ENCODE measurements at regions of chr11 and their contacts with region 1.

Region 1: GRCh38 chr11:63838678-63839507 is at the start of gene MARK2:
- DNase-seq: peak; percentile 99
- H3K4me3 ChIP-seq: peak within 1 kb of the TSS; percentile 76 to 87
- H3K27ac ChIP-seq: peak within 1 kb of the TSS; percentile 85 to 93
- H3K4me1 ChIP-seq: peaks cover 14% of the 10 kb centered on the region
- H3K27me3 ChIP-seq: no peaks in the 10 kb centered on the region
- CTCF ChIP-seq: no peak
- POLR2A ChIP-seq: peak; percentile 81
- total RNA-seq, gene MARK2: 65.4 to 67.2 TPM

Region 2: DNA sequence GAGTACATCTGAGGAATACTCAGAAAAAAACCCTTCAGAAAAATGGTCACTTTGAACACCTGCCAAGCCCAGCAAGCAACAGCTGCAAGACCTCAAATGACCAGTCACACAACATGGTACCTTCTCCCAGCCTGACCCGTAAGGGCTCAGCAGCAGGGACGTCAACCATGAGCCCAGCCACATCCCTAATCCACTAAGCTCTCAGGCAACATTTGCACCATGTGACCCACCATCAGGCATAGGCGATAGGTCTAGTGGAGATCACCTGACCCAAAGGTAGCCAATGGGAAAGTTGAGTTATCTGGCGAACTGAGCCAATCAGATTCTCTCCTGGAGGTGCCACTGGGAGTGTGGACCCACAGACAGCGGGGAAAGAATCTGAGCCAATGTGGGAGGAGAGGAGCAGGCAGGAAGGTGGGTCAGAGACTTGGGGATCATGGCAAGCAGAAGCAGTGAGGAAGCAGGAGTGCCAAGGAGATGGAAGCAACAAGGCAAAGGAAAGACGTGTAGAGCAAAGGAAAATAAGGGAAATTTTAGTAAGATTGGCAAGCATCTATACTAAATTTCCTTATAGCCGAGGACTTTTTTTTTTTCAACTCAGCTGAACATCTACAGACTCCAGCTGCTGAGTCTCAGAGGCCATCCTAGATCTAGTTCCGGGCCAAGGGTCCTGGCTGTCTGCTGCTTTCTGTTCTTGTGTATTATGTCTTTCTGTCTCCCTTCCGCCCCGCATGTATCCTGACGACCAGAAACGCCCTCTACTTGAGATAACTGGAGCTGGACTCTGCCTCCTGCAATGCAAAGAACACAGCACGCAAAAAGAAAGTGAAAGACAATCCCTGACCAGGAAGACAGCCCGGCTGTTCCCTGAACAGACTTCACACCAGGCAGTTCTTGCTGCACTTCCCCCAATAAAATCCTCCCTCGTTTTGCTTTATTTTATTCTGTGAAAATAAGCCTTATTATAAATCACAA is 264.7 kb before region 1 on chr11:
- intact Hi-C with region 1: no loop called
- DNase-seq: peak; percentile 67
- H3K4me3 ChIP-seq: peak overlapping the region; percentile 13 to 23
- H3K27ac ChIP-seq: peak overlapping the region; percentile 62 to 71
- H3K4me1 ChIP-seq: peaks cover 2% of the 10 kb centered on the region
- H3K27me3 ChIP-seq: no peaks in the 10 kb centered on the region
- CTCF ChIP-seq: peak in 1 of 4 experiments; percentile 8
- POLR2A ChIP-seq: no peak

Region 3: GRCh38 chr11:63745304-63746170 is 93.4 kb before region 1 on chr11:
- intact Hi-C with region 1: no loop called
- DNase-seq: no peak
- H3K4me3 ChIP-seq: no peak overlapping the region
- H3K27ac ChIP-seq: no peak overlapping the region
- H3K4me1 ChIP-seq: no peaks in the 10 kb centered on the region
- H3K27me3 ChIP-seq: no peaks in the 10 kb centered on the region
- CTCF ChIP-seq: peak in 1 of 4 experiments; percentile 2
- POLR2A ChIP-seq: no peak

Region 4: DNA sequence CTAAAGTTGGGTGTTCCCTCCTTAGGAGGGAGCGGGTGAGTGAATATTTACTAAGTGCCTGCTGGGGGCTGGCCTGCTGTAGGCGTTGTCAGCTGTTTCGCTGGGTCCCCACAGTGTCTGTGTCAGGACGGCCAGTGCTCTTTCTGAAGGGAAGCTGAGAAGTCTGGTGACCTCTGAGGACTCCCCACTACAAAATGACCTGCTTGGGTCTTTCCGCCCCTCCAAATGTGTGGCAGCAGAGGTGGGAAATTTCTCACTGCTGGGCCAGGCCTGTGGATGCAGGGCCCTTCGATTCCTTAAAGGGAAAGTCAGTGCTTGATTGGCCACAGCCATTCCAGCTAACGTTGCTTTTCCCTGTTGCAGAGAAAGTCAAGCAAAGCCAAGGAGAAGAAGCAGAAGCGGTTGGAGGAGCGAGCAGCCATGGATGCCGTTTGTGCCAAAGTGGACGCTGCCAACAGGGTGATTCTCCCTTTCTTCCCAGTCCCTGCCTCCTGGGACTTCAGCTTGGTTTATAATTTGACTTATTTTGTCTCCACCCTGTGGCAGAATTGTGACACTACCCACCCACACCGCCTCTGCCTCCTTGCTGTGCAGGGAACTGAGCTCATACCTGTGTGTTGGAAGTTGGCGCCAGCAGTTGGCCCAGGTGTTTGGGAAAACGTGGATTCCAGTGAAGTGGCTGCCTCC is 106.7 kb after region 1 on chr11:
- intact Hi-C with region 1: loop called (anchors 1 kb)
- DNase-seq: peak; percentile 85
- H3K4me3 ChIP-seq: no peak overlapping the region
- H3K27ac ChIP-seq: peak overlapping the region; percentile 14 to 19
- H3K4me1 ChIP-seq: no peaks in the 10 kb centered on the region
- H3K27me3 ChIP-seq: no peaks in the 10 kb centered on the region
- CTCF ChIP-seq: peak; percentile 50 to 96 (median 85)
- POLR2A ChIP-seq: no peak

Region 5: GRCh38 chr11:64000026-64000739 is 161.3 kb after region 1 on chr11:
- intact Hi-C with region 1: no loop called
- DNase-seq: peak; percentile 55
- H3K4me3 ChIP-seq: peak overlapping the region; percentile 20 to 24
- H3K27ac ChIP-seq: peak overlapping the region in 1 of 2 donors; percentile 31
- H3K4me1 ChIP-seq: peaks cover 22% of the 10 kb centered on the region
- H3K27me3 ChIP-seq: no peaks in the 10 kb centered on the region
- CTCF ChIP-seq: peak; percentile 79 to 98 (median 90)
- POLR2A ChIP-seq: no peak

Region 6: DNA sequence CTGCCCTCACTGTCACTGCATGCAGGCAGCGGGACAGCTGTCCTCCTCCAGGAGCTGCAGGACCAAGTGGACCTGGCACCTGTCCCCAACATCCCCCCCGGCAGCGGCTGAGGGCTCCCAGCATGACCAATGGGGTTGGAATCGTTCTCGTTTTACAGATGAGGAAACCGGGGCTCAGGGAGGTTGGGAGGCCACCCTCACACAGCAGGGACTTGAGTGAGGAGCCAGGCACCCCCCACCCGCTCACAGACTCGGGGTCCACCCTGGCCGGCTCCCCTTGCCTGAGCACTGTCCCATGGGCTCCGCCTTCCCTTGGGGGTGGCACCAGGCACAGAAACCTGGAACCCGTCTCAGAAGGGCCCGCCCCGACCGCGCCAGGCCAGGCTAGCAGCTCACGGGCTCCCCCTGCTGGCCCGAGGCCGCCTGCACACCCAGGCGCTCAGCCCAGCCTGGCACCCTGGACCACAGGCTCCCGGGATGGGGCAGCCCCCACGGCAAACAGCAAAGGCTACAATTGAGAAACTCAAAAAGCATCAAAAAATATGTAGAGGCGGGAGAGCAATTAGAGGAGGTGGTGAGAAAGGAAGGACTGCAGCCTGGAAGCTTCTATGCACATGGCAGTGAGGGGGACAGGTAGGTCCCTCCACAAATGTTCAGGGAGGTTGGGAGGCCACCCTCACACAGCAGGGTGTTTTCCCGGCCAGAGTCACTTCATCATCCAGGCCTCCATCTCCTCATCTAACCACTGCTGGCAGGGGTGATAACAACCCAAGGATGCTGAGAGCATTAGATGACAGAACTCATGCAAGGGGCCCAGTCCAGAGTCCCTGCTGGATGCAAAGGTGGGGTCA is 314.2 kb after region 1 on chr11:
- intact Hi-C with region 1: loop called (anchors 5 kb)
- DNase-seq: peak; percentile 52
- H3K4me3 ChIP-seq: no peak overlapping the region
- H3K27ac ChIP-seq: no peak overlapping the region
- H3K4me1 ChIP-seq: peaks cover 5% of the 10 kb centered on the region
- H3K27me3 ChIP-seq: no peaks in the 10 kb centered on the region
- CTCF ChIP-seq: peak; percentile 94 to 99 (median 97)
- POLR2A ChIP-seq: no peak

Measured in prostate gland (tissue), 2 donors.